ENCODE measurements at regions of chr7 and their contacts with region 1.

Region 1: GRCh38 chr7:76314042-76314721 is 11.7 kb downstream of the HSPB1 start:
- DNase-seq: peak; percentile 95 to 98
- ATAC-seq: peak; percentile 74 to 78 (median 75)
- H3K4me3 ChIP-seq: no peak overlapping the region
- H3K27ac ChIP-seq: peak overlapping the region; percentile 57
- H3K4me1 ChIP-seq: peaks cover 15% of the 10 kb centered on the region
- H3K27me3 ChIP-seq: no peaks in the 10 kb centered on the region
- CTCF ChIP-seq: peak; percentile 100

Region 2: GRCh38 chr7:76291343-76292212 is 22.6 kb before region 1 on chr7:
- intact Hi-C with region 1: loop called (anchors 1 kb)
- DNase-seq: peak; percentile 93 to 96
- ATAC-seq: peak; percentile 57 to 70 (median 65)
- H3K4me3 ChIP-seq: peak overlapping the region; percentile 63
- H3K27ac ChIP-seq: peak overlapping the region; percentile 98
- H3K4me1 ChIP-seq: peaks cover 49% of the 10 kb centered on the region
- H3K27me3 ChIP-seq: no peaks in the 10 kb centered on the region
- CTCF ChIP-seq: peak; percentile 99

Region 3: GRCh38 chr7:76359111-76359978 is 45.2 kb after region 1 on chr7:
- intact Hi-C with region 1: loop called (anchors 2 kb)
- DNase-seq: peak; percentile 95 to 99
- ATAC-seq: peak; percentile 93 to 95 (median 94)
- H3K4me3 ChIP-seq: peak overlapping the region; percentile 99
- H3K27ac ChIP-seq: peak overlapping the region; percentile 100
- H3K4me1 ChIP-seq: peaks cover 40% of the 10 kb centered on the region
- H3K27me3 ChIP-seq: no peaks in the 10 kb centered on the region
- CTCF ChIP-seq: peak; percentile 65

Region 4: GRCh38 chr7:76383089-76383944 is 69.1 kb after region 1 on chr7:
- intact Hi-C with region 1: no loop called
- DNase-seq: no peak
- ATAC-seq: no peak
- H3K4me3 ChIP-seq: no peak overlapping the region
- H3K27ac ChIP-seq: no peak overlapping the region
- H3K4me1 ChIP-seq: peaks cover 14% of the 10 kb centered on the region
- H3K27me3 ChIP-seq: no peaks in the 10 kb centered on the region
- CTCF ChIP-seq: no peak